ENCODE measurements at regions of chr4 and their contacts with region 1.

Region 1: DNA sequence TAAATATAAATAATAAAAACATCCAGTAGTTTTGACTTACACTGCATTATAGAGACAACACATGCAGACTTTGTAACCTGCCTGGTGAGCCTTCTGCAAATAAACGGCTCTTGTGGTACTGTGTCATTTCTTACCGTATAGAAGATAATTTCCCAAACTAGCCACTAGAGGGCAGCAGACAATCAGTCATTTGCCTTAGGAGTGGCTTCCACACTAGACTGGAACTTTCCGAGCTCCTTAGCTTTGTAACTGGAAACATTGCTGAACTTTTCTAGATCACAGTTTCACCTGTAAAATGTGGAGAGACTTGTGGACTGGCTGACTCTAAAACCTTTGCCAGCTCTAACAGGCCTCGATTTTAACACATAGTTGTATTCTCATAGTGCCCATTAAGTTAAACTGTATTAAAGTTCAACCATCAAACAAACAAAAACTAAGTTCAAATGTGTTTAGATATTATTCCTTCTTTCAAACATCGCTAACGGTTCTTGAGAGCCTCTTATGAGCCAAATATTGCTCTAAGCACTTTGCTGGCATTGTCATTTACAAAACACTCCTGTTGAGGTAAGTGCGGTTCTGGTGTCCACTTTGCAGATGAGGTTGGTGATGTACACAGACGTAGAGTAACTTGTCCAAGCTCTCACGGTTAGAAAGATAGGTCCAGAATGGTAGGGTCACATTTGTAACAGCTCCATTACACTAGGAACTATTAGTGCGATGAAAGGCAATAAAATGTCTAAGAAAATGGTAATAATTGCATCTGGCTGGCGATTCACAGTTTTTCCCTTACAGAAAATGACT is 345.5 kb downstream of the ANK2 start:
- DNase-seq: no peak

Region 2: DNA sequence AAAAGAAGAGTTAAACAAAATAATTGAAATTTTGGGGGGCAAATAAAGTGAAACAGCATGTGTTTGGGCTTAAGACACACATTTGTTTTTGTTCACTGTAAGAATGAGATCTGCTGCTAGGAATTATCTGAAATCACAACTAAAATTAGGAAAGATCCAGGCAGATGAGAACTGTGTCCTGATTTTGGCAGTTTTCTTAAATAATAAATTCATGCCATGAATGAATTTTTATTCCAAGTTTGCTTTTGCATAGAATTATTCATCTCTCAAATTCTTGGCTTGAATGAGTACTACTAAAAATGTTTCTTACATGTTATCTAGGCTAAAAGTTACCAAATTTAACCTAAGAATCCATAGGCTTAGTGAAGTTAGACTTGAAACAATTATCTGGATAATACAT is 23.8 kb before region 1 on chr4:
- intact Hi-C with region 1: no loop called
- DNase-seq: no peak

Region 3: GRCh38 chr4:113423631-113424030 is 28.7 kb after region 1 on chr4:
- intact Hi-C with region 1: no loop called
- DNase-seq: no peak

Region 4: DNA sequence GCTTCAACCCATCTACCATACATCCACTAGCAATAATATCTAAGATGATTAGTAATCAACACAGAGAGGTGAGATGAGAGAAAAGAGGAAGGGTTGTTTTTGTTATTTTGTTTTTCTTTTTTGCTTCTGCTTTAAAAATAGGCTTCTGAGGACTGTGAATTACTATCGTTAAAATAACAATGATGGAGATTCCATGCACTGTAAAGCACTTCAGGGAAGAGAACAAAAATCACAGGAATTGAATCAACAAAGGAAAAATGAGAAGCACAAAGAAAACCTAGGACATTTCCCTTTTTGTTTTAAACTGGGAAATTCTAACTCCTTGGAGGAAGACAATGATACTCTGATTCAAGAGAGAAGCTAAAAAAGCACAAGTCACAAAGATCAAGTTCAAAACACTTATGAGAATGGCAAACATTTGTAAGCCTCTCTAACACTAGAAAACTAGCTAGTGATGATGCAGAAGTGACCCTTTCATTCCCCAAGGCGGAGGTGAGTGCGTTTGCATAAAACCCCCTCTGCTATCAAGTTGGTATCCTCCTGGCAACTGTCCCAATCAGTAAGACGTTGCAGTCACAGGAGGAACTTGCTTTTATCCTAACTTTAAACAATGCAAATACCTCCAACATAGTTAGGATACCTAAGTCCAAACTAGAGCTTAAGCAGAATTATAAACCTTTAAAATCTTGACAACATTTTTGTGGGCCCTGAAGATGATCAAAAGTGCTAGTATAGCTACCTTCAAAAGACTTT is 58.1 kb after region 1 on chr4:
- intact Hi-C with region 1: loop called in 1 of 2 experiments (anchors 10 kb)
- DNase-seq: no peak

Region 5: DNA sequence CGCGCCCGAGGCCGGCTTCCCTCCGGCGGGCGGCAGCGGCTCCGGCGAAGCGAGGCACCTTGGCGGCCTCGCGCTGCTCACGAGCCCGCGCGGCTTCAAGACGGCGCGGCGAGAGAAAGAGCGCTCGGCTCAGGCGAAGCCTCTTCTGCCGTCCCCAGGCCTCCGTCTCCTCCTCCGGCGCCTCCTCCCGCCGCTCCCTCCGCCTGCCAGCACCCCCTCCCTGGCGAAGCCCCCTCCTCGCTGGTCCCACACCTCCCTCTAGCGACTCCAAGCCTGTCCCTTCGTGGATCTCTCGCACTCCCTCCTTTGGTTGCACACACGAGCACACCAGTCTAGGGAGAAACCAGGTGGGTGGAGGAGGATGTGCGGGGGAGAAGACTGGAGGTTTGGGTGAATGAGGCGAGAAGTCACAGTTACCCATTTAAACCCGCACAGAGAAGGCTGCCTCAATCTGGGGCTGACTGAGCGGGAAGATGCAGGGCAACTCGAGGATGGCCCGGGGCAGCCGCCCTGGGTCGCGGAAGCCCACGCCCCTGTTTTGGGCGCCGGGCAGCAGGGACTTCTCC is 366.8 kb after region 1 on chr4 and contains the start of gene CAMK2D:
- intact Hi-C with region 1: loop called (anchors 10 kb)
- DNase-seq: peak; percentile 95
- total RNA-seq, gene CAMK2D: 51.5 to 67.2 TPM

Region 6: GRCh38 chr4:114077610-114078009 is 682.7 kb after region 1 on chr4:
- intact Hi-C with region 1: loop called in 1 of 2 experiments (anchors 10 kb)
- DNase-seq: no peak